Activated CD8-positive, alpha-beta T cell treated with anti-CD3 and anti-CD28 coated beads for 36 hours (primary cell): ENCODE measurements at regions of chr22 and their contacts with region 1.

Region 1: GRCh38 chr22:38744981-38745380 is 10.8 kb downstream of the SUN2 start:
- DNase-seq: no peak
- ATAC-seq: no peak
- H3K4me3 Mint-ChIP-seq: no peak overlapping the region
- H3K27ac Mint-ChIP-seq: peak overlapping the region; percentile 78
- H3K4me1 Mint-ChIP-seq: peaks cover 28% of the 10 kb centered on the region
- H3K27me3 Mint-ChIP-seq: no peaks in the 10 kb centered on the region
- CTCF ChIP-seq: no peak

Region 2: GRCh38 chr22:38724926-38725571 is 19.9 kb before region 1 on chr22:
- CTCF ChIA-PET with region 1: interaction called, 15 read pairs
- POLR2A ChIA-PET with region 1: interaction called, 905 read pairs
- intact Hi-C with region 1: no loop called
- DNase-seq: peak; percentile 31
- ATAC-seq: peak; percentile 87
- H3K4me3 Mint-ChIP-seq: no peak overlapping the region
- H3K27ac Mint-ChIP-seq: peak overlapping the region; percentile 7
- H3K4me1 Mint-ChIP-seq: no peaks in the 10 kb centered on the region
- H3K27me3 Mint-ChIP-seq: no peaks in the 10 kb centered on the region
- CTCF ChIP-seq: peak; percentile 43

Region 3: DNA sequence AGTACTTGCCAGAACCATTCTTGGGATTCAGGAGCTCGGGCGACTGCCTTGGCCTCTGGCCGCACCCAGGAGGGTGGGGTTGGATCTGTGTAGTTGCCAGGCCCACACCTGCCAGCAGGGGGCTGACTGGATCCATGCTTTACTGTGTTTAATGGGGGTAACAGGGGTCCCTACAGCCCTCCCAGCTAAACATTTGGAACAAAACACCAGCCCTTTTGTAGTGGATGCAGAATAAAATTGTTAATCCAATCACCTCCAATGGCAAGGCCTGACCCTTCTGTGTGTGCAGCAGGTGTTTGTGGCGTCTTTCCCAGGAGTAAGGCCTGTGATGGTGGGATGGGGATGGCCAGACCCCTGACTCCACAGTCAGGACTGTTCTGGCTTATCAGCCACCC is 11.7 kb before region 1 on chr22:
- CTCF ChIA-PET with region 1: interaction called, 39 read pairs
- POLR2A ChIA-PET with region 1: interaction called, 905 read pairs
- intact Hi-C with region 1: no loop called
- DNase-seq: peak; percentile 71
- ATAC-seq: peak; percentile 61
- H3K4me3 Mint-ChIP-seq: peak overlapping the region; percentile 3
- H3K27ac Mint-ChIP-seq: peak overlapping the region; percentile 69
- H3K4me1 Mint-ChIP-seq: peaks cover 38% of the 10 kb centered on the region
- H3K27me3 Mint-ChIP-seq: no peaks in the 10 kb centered on the region
- CTCF ChIP-seq: peak; percentile 94

Region 4: DNA sequence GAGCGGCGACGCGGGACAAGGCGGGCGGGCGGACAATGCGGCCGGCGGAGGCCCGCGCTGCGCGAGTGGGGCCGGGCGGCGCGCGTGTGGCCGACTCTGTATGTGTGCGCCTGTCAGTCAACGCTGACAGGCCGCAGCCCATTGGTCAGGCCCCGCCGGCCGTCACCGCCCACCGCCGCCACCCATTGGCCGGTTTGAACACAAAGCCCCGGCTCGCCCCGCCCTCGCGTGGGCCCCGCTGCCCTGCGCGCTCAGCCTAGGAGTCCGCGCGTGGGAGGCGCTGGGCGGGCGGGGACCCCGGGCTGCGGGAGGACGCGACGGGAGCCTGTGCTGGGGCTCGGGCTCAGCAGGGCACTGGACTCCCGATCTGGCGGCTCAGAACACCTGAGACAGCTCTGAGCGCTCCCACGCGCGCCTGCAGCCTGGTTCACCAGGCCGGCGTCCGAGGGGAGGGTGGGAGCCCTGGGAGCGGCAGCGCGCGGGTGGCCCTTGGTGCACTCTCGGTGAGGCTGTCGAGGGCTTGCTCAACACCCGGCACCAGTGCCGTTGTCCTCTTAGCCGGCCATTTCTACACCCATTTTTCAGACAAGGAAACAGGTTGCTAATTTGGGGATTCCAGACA is 11.0 kb after region 1 on chr22 and contains the start of gene SUN2:
- CTCF ChIA-PET with region 1: interaction called, 4 read pairs
- POLR2A ChIA-PET with region 1: interaction called, 905 read pairs
- intact Hi-C with region 1: no loop called
- DNase-seq: peak; percentile 95
- ATAC-seq: peak; percentile 73
- H3K4me3 Mint-ChIP-seq: peak within 1 kb of the TSS; percentile 87
- H3K27ac Mint-ChIP-seq: peak within 1 kb of the TSS; percentile 99
- H3K4me1 Mint-ChIP-seq: peaks cover 54% of the 10 kb centered on the region
- H3K27me3 Mint-ChIP-seq: no peaks in the 10 kb centered on the region
- CTCF ChIP-seq: no peak
- total RNA-seq, gene SUN2: 101 to 107 TPM